ENCODE measurements at regions of chr7 and their contacts with region 1.

Region 1: GRCh38 chr7:52705768-52706167 is 329.7 kb upstream of the POM121L12 start:
- DNase-seq: no peak
- ATAC-seq: no peak
- H3K4me3 ChIP-seq: no peak overlapping the region
- H3K4me3 Mint-ChIP-seq: no peak overlapping the region
- H3K27ac ChIP-seq: no peak overlapping the region
- H3K27ac Mint-ChIP-seq: no peak overlapping the region
- H3K4me1 ChIP-seq: no peaks in the 10 kb centered on the region
- H3K4me1 Mint-ChIP-seq: no peaks in the 10 kb centered on the region
- H3K27me3 ChIP-seq: no peaks in the 10 kb centered on the region
- H3K27me3 Mint-ChIP-seq: no peaks in the 10 kb centered on the region

Region 2: DNA sequence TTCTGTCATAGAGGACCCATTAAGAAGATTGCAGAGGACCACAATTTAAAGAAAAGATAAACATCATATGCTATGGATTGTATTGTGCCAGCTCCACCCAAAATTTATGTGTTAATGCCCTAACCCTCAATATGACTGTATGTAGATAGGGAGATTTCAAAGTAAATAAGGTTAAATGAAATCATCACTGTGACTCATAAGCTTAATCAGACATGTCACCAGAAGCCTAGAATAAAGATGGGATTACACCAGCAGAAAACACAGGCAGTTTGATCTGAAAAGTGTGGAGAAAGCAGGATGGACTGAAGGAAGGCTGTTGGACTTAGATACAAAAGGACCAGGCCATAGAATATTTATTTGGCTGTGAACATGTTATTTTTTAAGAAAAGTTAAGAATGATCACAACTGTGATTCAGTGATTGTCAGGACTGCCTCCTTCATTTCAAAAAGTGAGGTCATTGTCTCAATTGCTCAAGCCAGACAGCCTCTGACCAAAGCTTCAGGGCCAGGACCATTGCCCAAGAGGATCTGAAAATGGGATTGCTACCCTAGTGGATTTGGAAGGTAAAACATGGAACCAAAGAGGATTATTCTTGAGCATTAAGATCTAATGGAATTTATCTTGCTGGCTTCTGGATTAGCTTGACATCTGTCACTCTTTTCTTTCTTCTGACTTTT is 58.9 kb after region 1 on chr7:
- CTCF ChIA-PET with region 1: interaction called, 3 read pairs
- POLR2A ChIA-PET with region 1: no interaction called
- intact Hi-C with region 1: loop called in 1 of 2 experiments (anchors 10 kb)
- DNase-seq: no peak
- ATAC-seq: no peak
- H3K4me3 ChIP-seq: no peak overlapping the region
- H3K4me3 Mint-ChIP-seq: no peak overlapping the region
- H3K27ac ChIP-seq: no peak overlapping the region
- H3K27ac Mint-ChIP-seq: no peak overlapping the region
- H3K4me1 ChIP-seq: no peaks in the 10 kb centered on the region
- H3K4me1 Mint-ChIP-seq: no peaks in the 10 kb centered on the region
- H3K27me3 ChIP-seq: no peaks in the 10 kb centered on the region
- H3K27me3 Mint-ChIP-seq: no peaks in the 10 kb centered on the region

Region 3: GRCh38 chr7:52876402-52876801 is 170.6 kb after region 1 on chr7:
- CTCF ChIA-PET with region 1: no interaction called
- POLR2A ChIA-PET with region 1: no interaction called
- intact Hi-C with region 1: no loop called
- DNase-seq: no peak
- ATAC-seq: no peak
- H3K4me3 ChIP-seq: no peak overlapping the region
- H3K4me3 Mint-ChIP-seq: no peak overlapping the region
- H3K27ac ChIP-seq: no peak overlapping the region
- H3K27ac Mint-ChIP-seq: no peak overlapping the region
- H3K4me1 ChIP-seq: no peaks in the 10 kb centered on the region
- H3K4me1 Mint-ChIP-seq: no peaks in the 10 kb centered on the region
- H3K27me3 ChIP-seq: no peaks in the 10 kb centered on the region
- H3K27me3 Mint-ChIP-seq: no peaks in the 10 kb centered on the region

Measured in naive thymus-derived CD4-positive, alpha-beta T cell (primary cell).